IMR-90 (cell line): ENCODE measurements at regions of chr3 and their contacts with region 1.

Region 1: GRCh38 chr3:59575113-59576001 is 525.5 kb upstream of the CFAP20DC start:
- DNase-seq: peak; percentile 69
- ATAC-seq: peak; percentile 88
- H3K4me3 ChIP-seq: no peak overlapping the region
- H3K27ac ChIP-seq: 0 out of 2 replicates have a peak overlapping the region, but pooled peaks have one; percentile 7
- H3K4me1 ChIP-seq: peaks cover 9% of the 10 kb centered on the region
- H3K27me3 ChIP-seq: no peaks in the 10 kb centered on the region
- CTCF ChIP-seq: peak; percentile 88
- POLR2A ChIP-seq: no peak
- RAD21 ChIP-seq: peak; percentile 91

Region 2: DNA sequence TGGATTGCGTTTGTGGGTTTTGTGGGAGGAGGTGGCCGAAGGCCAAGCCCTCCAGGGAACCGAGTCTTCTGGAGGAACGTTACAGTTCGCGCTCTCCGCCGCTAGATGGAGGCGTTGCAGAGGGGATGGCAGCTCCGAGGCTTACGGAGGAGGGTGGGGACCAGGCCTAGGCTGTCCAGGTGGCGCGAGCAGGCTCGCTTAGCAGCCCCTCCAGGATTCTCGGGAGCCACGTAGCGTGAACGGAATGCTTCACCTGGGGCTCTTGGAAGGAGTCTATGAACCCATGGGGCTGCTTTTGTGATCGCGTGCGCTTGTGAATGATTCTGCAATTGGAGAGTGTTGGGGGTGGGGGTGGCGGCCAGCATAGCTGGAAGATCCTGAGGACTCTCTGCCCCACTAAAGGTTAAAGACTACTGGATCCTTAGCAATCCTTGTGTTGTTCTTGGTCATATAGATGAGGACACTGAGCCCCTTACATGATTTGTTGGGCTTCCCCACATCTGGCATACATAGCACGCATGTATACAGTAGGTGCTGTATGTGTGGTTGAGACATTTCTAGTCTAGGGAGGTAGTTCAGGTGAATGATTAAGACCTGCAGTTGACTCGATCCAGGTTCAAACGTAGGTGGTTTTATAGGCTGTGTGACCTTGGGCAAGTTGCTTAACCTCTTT is 934.5 kb before region 1 on chr3:
- CTCF ChIA-PET with region 1: no interaction called
- POLR2A ChIA-PET with region 1: no interaction called
- dilution Hi-C with region 1: no loop called
- in situ Hi-C with region 1: no loop called
- intact Hi-C with region 1: loop called (anchors 10 kb)
- DNase-seq: peak; percentile 74
- ATAC-seq: peak; percentile 97
- H3K4me3 ChIP-seq: no peak overlapping the region
- H3K27ac ChIP-seq: no peak overlapping the region
- H3K4me1 ChIP-seq: peaks cover 7% of the 10 kb centered on the region; the same call in 1 of the 2 replicates
- H3K27me3 ChIP-seq: no peaks in the 10 kb centered on the region
- CTCF ChIP-seq: peak; percentile 92
- POLR2A ChIP-seq: peak; percentile 27; the same call in 1 of the 2 replicates
- RAD21 ChIP-seq: peak; percentile 98

Region 3: GRCh38 chr3:59313365-59313764 is 262.0 kb before region 1 on chr3:
- CTCF ChIA-PET with region 1: no interaction called
- POLR2A ChIA-PET with region 1: no interaction called
- dilution Hi-C with region 1: no loop called
- in situ Hi-C with region 1: no loop called
- intact Hi-C with region 1: loop called (anchors 1 kb)
- DNase-seq: peak; percentile 13
- ATAC-seq: peak; percentile 79
- H3K4me3 ChIP-seq: no peak overlapping the region
- H3K27ac ChIP-seq: no peak overlapping the region
- H3K4me1 ChIP-seq: no peaks in the 10 kb centered on the region
- H3K27me3 ChIP-seq: no peaks in the 10 kb centered on the region
- CTCF ChIP-seq: peak; percentile 61
- POLR2A ChIP-seq: no peak
- RAD21 ChIP-seq: peak; percentile 70

Region 4: DNA sequence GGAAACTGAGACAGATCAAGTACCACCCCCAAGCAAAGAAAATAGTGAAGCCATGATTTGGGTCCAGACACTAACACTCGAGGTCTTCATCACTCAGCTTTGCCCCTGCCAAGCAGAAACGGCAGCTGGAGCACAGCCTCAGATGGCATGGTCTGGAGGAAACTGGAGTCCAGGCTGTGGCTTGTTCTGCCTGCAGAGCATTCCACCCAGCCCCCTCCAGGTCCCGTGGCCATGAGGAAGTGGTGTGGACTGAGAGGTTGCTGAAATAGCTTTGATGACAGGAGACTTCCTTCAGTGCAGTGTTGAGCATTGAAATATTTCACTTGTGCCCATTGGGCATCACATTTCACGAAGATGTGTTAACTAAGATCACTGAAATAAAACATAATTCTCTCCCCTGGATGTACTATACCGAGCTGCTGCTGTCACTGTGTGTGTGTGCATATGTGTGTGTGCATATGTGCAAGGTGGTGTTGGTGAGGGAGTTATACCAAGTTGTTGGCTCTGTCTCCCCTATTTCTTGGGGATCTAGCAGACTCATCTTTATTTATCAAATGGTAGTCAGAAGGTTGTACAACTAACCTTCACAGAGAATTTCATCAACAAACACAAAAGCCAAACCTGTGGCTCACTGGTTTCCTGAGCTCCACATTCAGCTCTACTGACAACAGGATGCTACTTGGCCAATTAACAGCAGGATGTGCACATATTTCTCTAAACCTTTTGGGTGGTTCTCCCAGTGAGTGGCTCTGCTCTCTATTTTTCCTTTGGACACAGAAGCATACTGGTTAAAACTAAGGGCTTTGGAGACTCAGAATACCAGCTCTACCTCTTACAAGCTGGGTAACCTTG is 134.6 kb after region 1 on chr3:
- CTCF ChIA-PET with region 1: no interaction called
- POLR2A ChIA-PET with region 1: no interaction called
- dilution Hi-C with region 1: no loop called
- in situ Hi-C with region 1: no loop called
- intact Hi-C with region 1: no loop called
- DNase-seq: no peak
- ATAC-seq: no peak; the same call in none of the 2 replicates
- H3K4me3 ChIP-seq: no peak overlapping the region
- H3K27ac ChIP-seq: no peak overlapping the region
- H3K4me1 ChIP-seq: no peaks in the 10 kb centered on the region; the same call in 1 of the 2 replicates
- H3K27me3 ChIP-seq: peaks cover 10% of the 10 kb centered on the region
- CTCF ChIP-seq: no peak
- POLR2A ChIP-seq: no peak
- RAD21 ChIP-seq: no peak

Region 5: DNA sequence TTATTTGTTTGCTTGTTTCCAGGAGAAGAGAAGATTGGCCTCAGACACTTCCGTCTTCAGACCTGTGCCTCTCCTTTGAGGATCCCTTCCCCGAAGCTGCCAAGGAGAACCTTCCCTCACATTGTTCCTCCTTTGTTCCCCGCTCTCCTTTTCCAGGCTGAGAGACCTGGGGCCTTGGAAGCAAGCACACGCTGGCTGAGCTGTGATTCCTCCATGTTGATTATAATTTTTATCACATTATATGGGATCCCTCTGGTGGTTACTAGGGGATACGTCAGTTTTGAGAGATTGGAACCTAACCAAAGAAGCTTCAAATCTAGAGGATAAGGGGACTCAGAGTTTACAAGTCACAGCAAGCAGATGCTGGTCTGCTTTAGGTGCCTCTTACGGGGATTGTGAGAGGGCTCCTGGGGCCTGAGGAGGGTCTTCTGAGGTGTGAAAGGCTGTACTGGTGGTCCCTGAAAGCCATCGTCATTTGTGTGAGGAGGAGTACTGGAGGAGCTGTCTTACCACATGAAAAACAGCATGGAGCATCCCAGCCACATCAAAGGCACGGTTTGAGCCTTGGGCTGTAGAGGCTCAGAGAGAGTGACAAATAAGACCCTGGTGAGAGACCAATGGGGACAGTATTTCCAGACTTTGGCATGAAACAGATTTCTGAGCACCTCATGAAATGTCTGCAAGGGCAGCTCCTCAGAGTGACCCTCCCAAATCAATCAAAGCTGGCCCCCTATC is 234.5 kb after region 1 on chr3:
- CTCF ChIA-PET with region 1: interaction called, 3 read pairs
- POLR2A ChIA-PET with region 1: no interaction called
- dilution Hi-C with region 1: no loop called
- in situ Hi-C with region 1: no loop called
- intact Hi-C with region 1: loop called (anchors 1 kb)
- DNase-seq: peak; percentile 57
- ATAC-seq: peak; percentile 33; the same call in 1 of the 2 replicates
- H3K4me3 ChIP-seq: no peak overlapping the region
- H3K27ac ChIP-seq: peak overlapping the region; percentile 71
- H3K4me1 ChIP-seq: peaks cover 10% of the 10 kb centered on the region
- H3K27me3 ChIP-seq: no peaks in the 10 kb centered on the region
- CTCF ChIP-seq: peak; percentile 47
- POLR2A ChIP-seq: no peak
- RAD21 ChIP-seq: peak; percentile 47

Region 6: GRCh38 chr3:60316121-60316797 is 740.9 kb after region 1 on chr3:
- CTCF ChIA-PET with region 1: no interaction called
- POLR2A ChIA-PET with region 1: no interaction called
- dilution Hi-C with region 1: no loop called
- in situ Hi-C with region 1: no loop called
- intact Hi-C with region 1: loop called (anchors 10 kb)
- DNase-seq: peak; percentile 78
- ATAC-seq: peak; percentile 63
- H3K4me3 ChIP-seq: no peak overlapping the region
- H3K27ac ChIP-seq: no peak overlapping the region
- H3K4me1 ChIP-seq: no peaks in the 10 kb centered on the region; the same call in 1 of the 2 replicates
- H3K27me3 ChIP-seq: no peaks in the 10 kb centered on the region
- CTCF ChIP-seq: no peak
- POLR2A ChIP-seq: no peak
- RAD21 ChIP-seq: no peak

Region 7: DNA sequence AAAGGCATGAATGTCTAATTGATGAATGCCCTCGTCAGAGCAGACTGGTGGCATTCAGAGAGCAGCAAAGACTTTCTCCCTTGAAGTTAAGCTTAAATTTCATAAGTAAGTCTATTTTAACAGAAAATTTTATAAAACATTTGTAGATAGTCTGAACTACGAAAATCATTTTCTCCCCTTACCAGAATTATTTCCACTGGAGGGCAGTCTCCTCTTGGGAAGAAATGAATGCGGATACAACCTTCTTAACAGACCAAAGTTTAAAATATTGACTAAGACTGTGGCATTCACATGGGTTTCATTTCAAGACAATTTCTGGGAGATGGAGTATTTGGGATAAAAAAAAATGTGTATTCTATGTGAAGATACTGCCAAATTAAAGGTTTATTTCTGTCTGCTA is 1006.9 kb after region 1 on chr3:
- CTCF ChIA-PET with region 1: no interaction called
- POLR2A ChIA-PET with region 1: no interaction called
- dilution Hi-C with region 1: no loop called
- in situ Hi-C with region 1: no loop called
- intact Hi-C with region 1: loop called (anchors 10 kb)
- DNase-seq: no peak
- ATAC-seq: no peak
- H3K4me3 ChIP-seq: no peak overlapping the region
- H3K27ac ChIP-seq: no peak overlapping the region
- H3K4me1 ChIP-seq: peaks cover 2% of the 10 kb centered on the region; the same call in 1 of the 2 replicates
- H3K27me3 ChIP-seq: no peaks in the 10 kb centered on the region
- CTCF ChIP-seq: peak; percentile 18; the same call in 1 of the 2 replicates
- POLR2A ChIP-seq: no peak
- RAD21 ChIP-seq: no peak